Dendritic cell treated with granulocyte-macrophage colony-stimulating factor and Interleukin-4, amounts not matched to agents 40 ng/mL and 50 ng/mL, for 4 days (primary cell): ENCODE measurements at regions of chr4 and their contacts with region 1.

Region 1: GRCh38 chr4:78951862-78952472 is 12.7 kb upstream of the PAQR3 start:
- H3K4me3 Mint-ChIP-seq: no peak overlapping the region
- H3K27ac Mint-ChIP-seq: no peak overlapping the region
- H3K4me1 Mint-ChIP-seq: peaks cover 3% of the 10 kb centered on the region
- H3K27me3 Mint-ChIP-seq: peaks cover 5% of the 10 kb centered on the region

Region 2: GRCh38 chr4:79178760-79179159 is 226.8 kb after region 1 on chr4:
- intact Hi-C with region 1: no loop called
- H3K4me3 Mint-ChIP-seq: no peak overlapping the region
- H3K27ac Mint-ChIP-seq: no peak overlapping the region
- H3K4me1 Mint-ChIP-seq: no peaks in the 10 kb centered on the region
- H3K27me3 Mint-ChIP-seq: no peaks in the 10 kb centered on the region

Region 3: DNA sequence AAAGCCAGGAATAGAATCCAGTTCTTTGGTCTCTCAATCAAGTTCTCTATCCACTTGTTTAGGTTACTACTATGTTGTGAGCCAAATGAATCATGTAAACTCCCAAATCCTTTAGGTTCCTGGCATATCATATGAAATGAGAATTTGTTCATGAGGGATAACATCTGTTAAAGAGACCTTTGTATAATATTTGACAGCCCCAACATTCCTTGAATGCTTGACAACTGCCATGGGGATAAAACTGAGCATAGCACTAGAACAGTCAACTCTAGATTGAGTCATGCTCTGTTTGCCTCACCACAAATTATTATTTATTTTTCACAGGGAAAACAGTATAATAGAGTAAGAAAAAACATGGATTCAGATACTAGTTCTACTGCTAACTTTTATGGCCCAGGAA is 280.6 kb after region 1 on chr4:
- intact Hi-C with region 1: no loop called
- H3K4me3 Mint-ChIP-seq: no peak overlapping the region
- H3K27ac Mint-ChIP-seq: no peak overlapping the region
- H3K4me1 Mint-ChIP-seq: no peaks in the 10 kb centered on the region
- H3K27me3 Mint-ChIP-seq: no peaks in the 10 kb centered on the region

Region 4: DNA sequence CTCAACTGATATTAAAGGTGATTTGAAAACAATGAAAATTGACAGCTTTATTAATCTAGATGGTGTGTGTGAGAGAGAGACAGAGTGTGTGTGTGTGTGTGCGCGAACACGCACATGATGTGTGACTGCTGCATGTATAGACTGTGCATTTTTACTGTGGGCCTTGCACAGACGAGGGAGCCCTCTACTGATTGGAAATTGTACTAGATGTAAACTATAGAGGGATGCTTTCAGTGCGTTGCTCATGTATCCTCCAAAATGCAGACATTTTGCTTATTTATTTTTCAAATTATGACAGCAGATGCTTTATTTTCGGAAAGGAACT is 624.4 kb after region 1 on chr4:
- intact Hi-C with region 1: loop called (anchors 5 kb)
- H3K4me3 Mint-ChIP-seq: no peak overlapping the region
- H3K27ac Mint-ChIP-seq: no peak overlapping the region
- H3K4me1 Mint-ChIP-seq: peaks cover 5% of the 10 kb centered on the region
- H3K27me3 Mint-ChIP-seq: peaks cover 1% of the 10 kb centered on the region

Region 5: DNA sequence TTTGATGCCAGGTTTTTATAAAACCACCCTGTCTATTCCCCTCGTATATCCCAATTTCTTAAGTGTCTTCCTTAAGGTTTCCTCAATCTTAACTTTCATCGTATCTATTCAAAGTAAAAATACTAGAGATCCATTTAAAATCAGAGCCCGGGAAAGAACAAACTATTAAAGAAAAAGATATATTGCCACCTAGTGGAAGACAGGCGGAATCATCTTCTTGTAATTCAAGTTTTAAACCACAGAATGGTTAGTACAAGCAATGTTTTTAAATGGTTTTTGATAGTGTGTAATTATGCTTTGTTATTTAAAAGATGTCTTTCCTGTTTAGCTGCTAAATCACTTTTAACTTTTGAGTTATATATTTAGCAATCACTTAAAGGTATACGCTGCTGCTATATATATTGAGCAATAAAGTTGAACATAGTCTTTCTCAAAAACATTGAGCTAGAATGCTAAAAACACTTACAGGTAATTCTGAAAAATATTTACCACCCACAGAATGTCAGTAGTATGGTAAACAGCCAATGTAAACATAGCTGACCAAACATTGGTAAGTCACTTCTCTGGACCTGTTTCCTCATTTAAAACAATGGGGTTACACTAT is 1263.6 kb after region 1 on chr4:
- intact Hi-C with region 1: loop called (anchors 5 kb)
- H3K4me3 Mint-ChIP-seq: no peak overlapping the region
- H3K27ac Mint-ChIP-seq: no peak overlapping the region
- H3K4me1 Mint-ChIP-seq: no peaks in the 10 kb centered on the region
- H3K27me3 Mint-ChIP-seq: peaks cover 8% of the 10 kb centered on the region

Region 6: GRCh38 chr4:80335554-80336358 is 1383.8 kb after region 1 on chr4 and contains the start of gene CFAP299:
- intact Hi-C with region 1: loop called (anchors 5 kb)
- H3K4me3 Mint-ChIP-seq: peak within 1 kb of the TSS; percentile 87
- H3K27ac Mint-ChIP-seq: no peak within 1 kb of the TSS
- H3K4me1 Mint-ChIP-seq: peaks cover 13% of the 10 kb centered on the region
- H3K27me3 Mint-ChIP-seq: peaks cover 15% of the 10 kb centered on the region